Activated naive CD4-positive, alpha-beta T cell treated with anti-CD3 and anti-CD28 coated beads, Interleukin-2, amount 10 ng/mL, durations not matched to agents 7 days and 5 days (primary cell): ENCODE measurements at regions of chr3 and their contacts with region 1.

Region 1: GRCh38 chr3:123652346-123652984 is 67.6 kb upstream of the HACD2 start:
- DNase-seq: peak; percentile 39
- H3K4me3 Mint-ChIP-seq: no peak overlapping the region
- H3K27ac Mint-ChIP-seq: no peak overlapping the region
- H3K4me1 Mint-ChIP-seq: no peaks in the 10 kb centered on the region
- H3K27me3 Mint-ChIP-seq: no peaks in the 10 kb centered on the region

Region 2: GRCh38 chr3:123723522-123724168 is 71.2 kb after region 1 on chr3:
- CTCF ChIA-PET with region 1: interaction called, 26 read pairs
- DNase-seq: peak; percentile 60
- H3K4me3 Mint-ChIP-seq: no peak overlapping the region
- H3K27ac Mint-ChIP-seq: no peak overlapping the region
- H3K4me1 Mint-ChIP-seq: no peaks in the 10 kb centered on the region
- H3K27me3 Mint-ChIP-seq: peaks cover 19% of the 10 kb centered on the region